Activated CD4-positive, alpha-beta T cell treated with anti-CD3 and anti-CD28 coated beads for 36 hours (primary cell): ENCODE measurements at regions of chr19 and their contacts with region 1.

Region 1: DNA sequence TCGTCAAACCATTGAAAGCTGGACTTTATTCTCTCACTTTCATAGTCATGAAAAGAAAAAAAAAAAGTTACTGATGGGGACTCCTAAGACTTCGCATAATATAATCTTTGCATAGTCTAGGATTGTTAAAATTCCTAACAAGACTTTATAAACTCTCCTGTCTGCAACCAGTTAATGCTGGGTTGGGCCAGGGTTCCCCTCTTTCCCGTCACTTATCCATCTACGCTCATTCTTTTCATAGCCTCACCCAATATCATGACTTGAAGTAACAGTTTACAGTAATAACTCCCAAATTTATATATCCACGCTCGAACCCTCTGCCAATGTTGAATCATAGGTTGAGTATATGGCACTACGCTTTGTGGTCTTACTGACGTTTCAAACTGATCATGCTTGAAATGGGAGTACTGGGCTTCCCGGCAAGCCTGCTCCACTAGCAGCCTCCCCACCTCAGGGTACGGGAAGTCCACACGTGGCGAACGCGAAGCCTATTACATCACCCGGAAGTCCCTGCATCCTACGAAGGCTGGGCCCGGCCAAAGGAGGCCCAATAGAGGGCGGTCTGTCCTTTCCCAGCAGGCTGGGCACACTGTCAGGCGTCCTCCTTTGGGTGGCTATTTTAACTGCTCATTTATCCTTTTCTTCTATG is 743 bp upstream of the ZNF460 start:
- DNase-seq: peak; percentile 92
- ATAC-seq: peak; percentile 74
- H3K4me3 Mint-ChIP-seq: no peak overlapping the region
- H3K27ac Mint-ChIP-seq: no peak overlapping the region
- H3K4me1 Mint-ChIP-seq: peaks cover 31% of the 10 kb centered on the region
- H3K27me3 Mint-ChIP-seq: no peaks in the 10 kb centered on the region

Region 2: DNA sequence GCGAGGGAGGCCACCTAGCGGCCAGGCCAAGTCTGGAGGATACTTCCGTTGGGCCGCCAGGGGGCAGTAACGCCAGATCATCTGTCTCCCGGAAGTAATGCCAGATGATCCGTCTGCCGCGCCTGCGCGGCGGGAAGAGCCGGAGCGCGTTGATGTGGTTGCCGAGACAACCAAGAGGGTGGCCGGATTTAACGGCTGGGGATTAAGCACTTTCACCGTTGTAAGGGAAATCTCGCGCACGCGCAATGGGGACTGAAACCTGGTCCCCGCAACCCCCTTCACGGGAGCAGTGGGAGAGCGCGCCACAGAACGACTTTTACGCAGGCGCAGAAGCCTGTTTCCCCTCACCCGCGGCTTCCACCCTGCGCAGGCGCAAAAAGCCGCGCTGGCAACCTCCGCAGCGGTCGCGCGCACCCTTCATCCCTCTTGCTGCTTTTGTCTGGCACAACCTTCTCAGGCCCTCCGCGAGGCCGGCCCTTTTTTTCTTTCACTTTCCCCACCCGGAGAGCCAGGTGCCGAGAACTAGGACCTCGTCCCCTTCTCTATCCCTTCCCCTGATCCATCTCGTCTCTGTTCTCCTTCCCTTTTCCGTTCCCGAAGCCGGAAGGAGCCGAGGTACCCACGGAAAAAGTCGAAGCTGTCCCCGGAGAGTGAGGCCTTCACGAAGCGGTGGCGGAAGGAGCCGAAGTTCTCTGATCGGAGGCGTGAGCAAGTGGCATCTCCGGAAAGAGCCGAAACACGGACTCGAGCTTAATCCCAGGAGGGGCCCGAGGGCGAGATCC is 1625.6 kb before region 1 on chr19:
- CTCF ChIA-PET with region 1: no interaction called
- POLR2A ChIA-PET with region 1: no interaction called
- intact Hi-C with region 1: loop called in 1 of 2 experiments (anchors 5 kb)
- DNase-seq: peak; percentile 99
- ATAC-seq: peak; percentile 84
- H3K4me3 Mint-ChIP-seq: peak overlapping the region; percentile 86
- H3K27ac Mint-ChIP-seq: peak overlapping the region; percentile 98
- H3K4me1 Mint-ChIP-seq: peaks cover 37% of the 10 kb centered on the region
- H3K27me3 Mint-ChIP-seq: no peaks in the 10 kb centered on the region

Region 3: DNA sequence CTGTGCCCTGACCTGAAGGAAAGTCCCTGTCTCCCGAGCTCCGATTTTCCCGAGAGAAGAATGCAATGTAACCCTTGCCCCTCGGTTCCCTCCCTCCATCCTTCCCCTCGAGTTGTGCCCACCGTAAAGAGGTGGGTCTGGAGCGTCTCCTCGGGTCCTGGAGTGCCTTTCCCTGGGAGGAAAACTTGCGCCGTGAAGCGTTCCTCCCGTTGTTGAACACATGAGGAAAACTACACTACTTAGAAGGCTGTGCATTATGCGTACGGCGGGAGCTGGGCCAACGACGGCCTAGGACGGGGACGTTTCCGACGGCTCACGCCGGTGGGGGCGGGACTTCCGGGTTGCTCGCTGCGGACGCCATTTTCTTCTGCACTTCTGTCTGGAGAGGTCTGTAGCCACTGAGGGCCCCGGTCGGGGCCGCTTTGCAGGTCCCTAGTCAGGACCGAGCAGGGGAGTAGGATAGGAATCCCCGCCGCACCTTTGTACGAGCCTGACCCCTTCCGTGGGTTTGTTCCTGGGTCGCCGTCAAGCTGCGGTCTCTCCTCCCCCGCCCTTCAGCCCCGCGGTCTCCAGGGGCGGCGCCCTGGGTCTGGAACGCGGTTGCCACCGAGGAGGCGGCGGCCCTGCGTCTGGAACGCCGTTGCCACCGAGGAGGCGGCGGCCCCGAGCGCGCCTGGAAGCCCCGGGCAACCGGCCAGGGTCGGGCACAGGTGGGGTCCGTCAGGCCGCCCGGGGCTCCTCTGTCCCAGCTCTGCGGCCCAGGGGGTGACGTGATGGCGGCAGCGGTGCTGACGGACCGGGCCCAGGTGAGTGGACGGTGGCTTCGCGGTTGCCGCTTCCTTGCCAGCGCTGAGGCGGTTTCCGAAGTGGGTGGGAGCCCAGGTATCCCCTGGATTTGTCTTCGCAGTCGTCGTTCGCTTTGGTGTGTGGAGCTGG is 88.1 kb before region 1 on chr19 and contains the start of gene ZNF264:
- CTCF ChIA-PET with region 1: no interaction called
- POLR2A ChIA-PET with region 1: no interaction called
- intact Hi-C with region 1: loop called in 1 of 2 experiments (anchors 1 kb)
- DNase-seq: peak; percentile 93
- ATAC-seq: peak; percentile 96
- H3K4me3 Mint-ChIP-seq: peak within 1 kb of the TSS; percentile 93
- H3K27ac Mint-ChIP-seq: peak within 1 kb of the TSS; percentile 95
- H3K4me1 Mint-ChIP-seq: peaks cover 28% of the 10 kb centered on the region
- H3K27me3 Mint-ChIP-seq: peaks cover 4% of the 10 kb centered on the region
- total RNA-seq, gene ZNF264: 14.8 to 21.1 TPM

Region 4: DNA sequence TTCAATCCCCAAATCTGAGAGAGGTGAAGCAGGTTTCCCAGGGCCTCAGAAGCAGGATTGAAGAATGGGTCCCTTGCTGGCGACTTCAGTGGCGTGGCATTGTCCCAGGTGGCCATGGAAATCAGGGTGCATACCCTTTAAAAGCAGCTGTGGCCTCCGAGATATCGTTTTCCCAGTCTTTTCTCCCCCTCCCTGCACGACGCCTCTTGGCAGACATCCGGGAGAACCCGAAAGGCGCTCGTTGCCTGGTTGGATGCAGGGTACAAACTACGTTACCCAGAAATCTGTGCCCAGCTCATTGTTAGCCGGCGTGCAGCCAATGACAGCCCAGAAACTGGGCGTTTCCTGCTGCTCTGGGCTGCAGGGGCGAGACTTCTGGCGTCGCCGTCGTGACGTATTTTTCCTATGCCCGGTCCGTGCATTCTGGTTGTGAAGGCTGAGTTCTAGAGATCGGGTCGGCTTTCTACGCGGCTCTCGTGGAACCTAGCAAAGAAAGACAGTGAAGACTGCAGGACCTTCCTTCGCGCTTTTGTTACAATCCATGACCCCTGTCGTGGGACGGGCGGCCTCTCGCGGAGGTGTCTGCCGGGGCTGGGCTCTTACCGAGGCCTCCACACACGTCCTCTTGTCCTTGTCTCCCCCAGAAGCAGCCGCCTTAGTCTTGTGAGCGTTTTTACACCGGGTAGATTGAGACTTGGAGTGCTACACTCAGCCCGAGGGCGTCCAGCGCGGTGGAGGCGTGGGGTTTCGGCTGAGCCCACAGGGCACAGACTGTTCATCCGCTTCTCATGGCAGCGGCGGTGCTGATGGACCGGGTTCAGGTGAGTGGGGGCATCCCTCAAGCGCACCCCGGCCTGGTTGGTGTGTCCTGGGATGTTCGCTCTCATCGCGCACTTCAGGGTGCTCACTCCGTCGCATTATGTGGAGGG is 71.6 kb after region 1 on chr19 and contains the start of gene ZNF304:
- CTCF ChIA-PET with region 1: no interaction called
- POLR2A ChIA-PET with region 1: no interaction called
- intact Hi-C with region 1: loop called in 1 of 2 experiments (anchors 1 kb)
- DNase-seq: peak; percentile 94
- ATAC-seq: peak; percentile 100
- H3K4me3 Mint-ChIP-seq: peak within 1 kb of the TSS; percentile 96
- H3K27ac Mint-ChIP-seq: peak within 1 kb of the TSS; percentile 90
- H3K4me1 Mint-ChIP-seq: peaks cover 25% of the 10 kb centered on the region
- H3K27me3 Mint-ChIP-seq: peaks cover 4% of the 10 kb centered on the region
- total RNA-seq, gene ZNF304: 6.2 TPM

Region 5: DNA sequence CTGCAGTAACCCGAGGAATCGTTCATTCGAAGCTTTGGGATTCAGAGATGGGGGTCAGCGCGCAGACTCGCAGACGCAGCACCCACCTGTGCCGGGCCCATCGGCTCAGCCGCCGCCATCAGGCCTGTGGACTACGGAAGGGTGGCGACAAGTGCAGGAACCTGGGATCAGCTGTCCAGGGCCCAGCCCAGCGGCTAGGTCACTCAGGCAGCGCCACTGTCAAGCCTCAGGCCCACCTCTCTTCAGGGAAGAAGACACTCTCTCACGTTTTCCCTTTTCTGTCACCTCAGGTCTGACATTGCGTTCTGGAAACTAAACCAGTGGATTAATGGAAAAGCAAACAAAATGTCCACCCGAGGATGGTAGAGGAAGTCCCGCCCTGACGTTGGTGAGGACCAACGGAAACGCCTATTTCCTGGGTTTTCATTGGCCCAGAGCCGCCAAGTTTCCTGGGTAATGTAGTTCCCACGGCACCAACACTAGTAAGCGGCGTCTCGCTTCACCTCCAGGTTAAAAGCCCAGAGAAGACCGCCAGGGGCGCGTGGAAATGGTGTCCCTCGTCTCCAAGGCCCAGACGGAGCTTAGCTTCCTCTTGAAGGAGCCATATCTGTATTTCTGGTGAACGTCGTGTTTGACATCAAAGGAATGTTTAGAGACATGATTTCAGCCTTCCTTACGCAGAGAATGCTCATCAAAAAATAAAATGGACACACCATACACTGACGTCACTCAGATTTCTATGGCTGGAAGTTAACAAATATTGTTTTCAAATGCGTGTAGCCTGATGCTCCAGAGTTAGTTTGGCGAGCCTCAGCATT is 197.9 kb after region 1 on chr19 and contains the start of gene ZNF772:
- CTCF ChIA-PET with region 1: no interaction called
- POLR2A ChIA-PET with region 1: no interaction called
- intact Hi-C with region 1: loop called in 1 of 2 experiments (anchors 5 kb)
- DNase-seq: peak; percentile 92
- ATAC-seq: peak; percentile 100
- H3K4me3 Mint-ChIP-seq: peak within 1 kb of the TSS; percentile 76
- H3K27ac Mint-ChIP-seq: peak within 1 kb of the TSS; percentile 79
- H3K4me1 Mint-ChIP-seq: peaks cover 17% of the 10 kb centered on the region
- H3K27me3 Mint-ChIP-seq: no peaks in the 10 kb centered on the region
- total RNA-seq, gene ZNF772: 6.5 to 7.5 TPM

Region 6: GRCh38 chr19:57632987-57633831 is 353.7 kb after region 1 on chr19 and contains the start of gene ZNF211:
- CTCF ChIA-PET with region 1: no interaction called
- POLR2A ChIA-PET with region 1: no interaction called
- intact Hi-C with region 1: loop called in 1 of 2 experiments (anchors 1 kb)
- DNase-seq: peak; percentile 91
- ATAC-seq: peak; percentile 100
- H3K4me3 Mint-ChIP-seq: peak within 1 kb of the TSS; percentile 96
- H3K27ac Mint-ChIP-seq: peak within 1 kb of the TSS; percentile 86
- H3K4me1 Mint-ChIP-seq: peaks cover 19% of the 10 kb centered on the region
- H3K27me3 Mint-ChIP-seq: no peaks in the 10 kb centered on the region
- total RNA-seq, gene ZNF211: 8.9 to 9.5 TPM

Region 7: GRCh38 chr19:57903618-57904184 is 624.2 kb after region 1 on chr19:
- CTCF ChIA-PET with region 1: no interaction called
- POLR2A ChIA-PET with region 1: no interaction called
- intact Hi-C with region 1: no loop called
- DNase-seq: no peak
- ATAC-seq: no peak
- H3K4me3 Mint-ChIP-seq: no peak overlapping the region
- H3K27ac Mint-ChIP-seq: peak overlapping the region; percentile 74
- H3K4me1 Mint-ChIP-seq: peaks cover 14% of the 10 kb centered on the region
- H3K27me3 Mint-ChIP-seq: no peaks in the 10 kb centered on the region